Panc1 (cell line): ENCODE measurements at regions of chr6 and their contacts with region 1.

Region 1: GRCh38 chr6:34475767-34476328 is 10.0 kb downstream of the PACSIN1 start:
- DNase-seq: no peak
- ATAC-seq: no peak
- H3K4me3 ChIP-seq: no peak overlapping the region
- H3K27ac ChIP-seq: no peak overlapping the region
- H3K4me1 ChIP-seq: no peaks in the 10 kb centered on the region
- H3K27me3 ChIP-seq: no peaks in the 10 kb centered on the region
- CTCF ChIP-seq: no peak

Region 2: DNA sequence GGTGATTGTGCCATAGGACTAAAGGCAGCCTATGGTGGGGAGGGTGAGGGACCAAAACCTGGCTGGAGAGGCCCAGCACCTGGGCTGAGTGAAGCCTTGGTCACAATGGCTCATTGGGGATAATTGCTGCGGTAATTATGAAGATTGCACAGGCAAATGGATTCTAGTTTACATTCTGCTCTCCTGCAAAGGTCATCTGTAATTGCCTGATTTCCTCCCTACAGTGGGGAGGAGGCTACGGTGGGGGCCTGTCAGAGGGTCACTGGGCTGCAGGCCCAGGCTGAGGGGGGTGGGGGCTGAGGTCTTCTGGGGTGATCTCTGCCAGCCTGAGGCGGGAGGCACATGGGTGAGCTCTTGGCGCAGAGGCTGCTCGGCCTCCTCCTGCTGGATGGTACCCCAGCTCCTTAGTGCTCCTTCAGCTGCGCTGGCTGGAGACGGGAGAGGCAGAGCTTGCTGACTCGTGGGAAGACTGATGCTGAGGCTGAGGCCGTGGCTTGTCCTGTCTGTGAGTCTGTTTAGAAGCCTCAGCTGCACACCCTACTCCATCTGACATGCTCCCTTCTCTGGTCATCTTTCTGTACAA is 20.3 kb after region 1 on chr6:
- CTCF ChIA-PET with region 1: no interaction called
- POLR2A ChIA-PET with region 1: interaction called, 13 read pairs
- in situ Hi-C with region 1: no loop called
- intact Hi-C with region 1: no loop called
- DNase-seq: no peak
- ATAC-seq: no peak
- H3K4me3 ChIP-seq: no peak overlapping the region
- H3K27ac ChIP-seq: no peak overlapping the region
- H3K4me1 ChIP-seq: no peaks in the 10 kb centered on the region
- H3K27me3 ChIP-seq: no peaks in the 10 kb centered on the region
- CTCF ChIP-seq: no peak